Dorsolateral prefrontal cortex (tissue), 120 donors: ENCODE measurements at regions of chr9 and their contacts with region 1.

Region 1: DNA sequence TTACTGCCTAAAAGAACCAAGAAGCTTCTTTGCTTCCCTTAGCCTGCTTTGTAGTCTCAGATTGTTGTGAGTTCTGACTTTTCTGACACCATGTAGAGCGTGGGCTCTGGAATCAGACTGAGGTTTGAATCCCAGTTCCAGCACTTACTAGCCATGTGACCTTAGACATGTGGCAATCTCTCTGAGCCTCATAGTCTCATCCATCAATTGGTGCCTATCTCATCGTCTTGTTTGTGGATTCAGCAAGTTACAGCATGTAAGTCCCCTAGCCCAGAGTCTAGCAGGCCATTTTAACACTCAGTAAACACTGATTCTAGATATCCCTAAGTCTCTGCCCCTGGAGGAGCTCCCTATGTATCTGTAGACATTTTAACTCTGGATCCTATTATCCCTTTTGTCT is 94.7 kb downstream of the ANGPTL2 start:
- DNase-seq: no peak
- H3K4me3 ChIP-seq: no peak overlapping the region
- H3K27ac ChIP-seq: peak overlapping the region in 14 of 59 donors; percentile 1 to 55 (median 22)
- H3K27me3 ChIP-seq: no peaks in the 10 kb centered on the region
- CTCF ChIP-seq: no peak

Region 2: GRCh38 chr9:126661521-126662220 is 366.0 kb before region 1 on chr9:
- intact Hi-C with region 1: no loop called
- DNase-seq: no peak
- H3K4me3 ChIP-seq: no peak overlapping the region
- H3K27ac ChIP-seq: no peak overlapping the region
- H3K27me3 ChIP-seq: peaks cover 0 to 33% (median 10%) of the 10 kb centered on the region in 45 donors
- CTCF ChIP-seq: no peak

Region 3: DNA sequence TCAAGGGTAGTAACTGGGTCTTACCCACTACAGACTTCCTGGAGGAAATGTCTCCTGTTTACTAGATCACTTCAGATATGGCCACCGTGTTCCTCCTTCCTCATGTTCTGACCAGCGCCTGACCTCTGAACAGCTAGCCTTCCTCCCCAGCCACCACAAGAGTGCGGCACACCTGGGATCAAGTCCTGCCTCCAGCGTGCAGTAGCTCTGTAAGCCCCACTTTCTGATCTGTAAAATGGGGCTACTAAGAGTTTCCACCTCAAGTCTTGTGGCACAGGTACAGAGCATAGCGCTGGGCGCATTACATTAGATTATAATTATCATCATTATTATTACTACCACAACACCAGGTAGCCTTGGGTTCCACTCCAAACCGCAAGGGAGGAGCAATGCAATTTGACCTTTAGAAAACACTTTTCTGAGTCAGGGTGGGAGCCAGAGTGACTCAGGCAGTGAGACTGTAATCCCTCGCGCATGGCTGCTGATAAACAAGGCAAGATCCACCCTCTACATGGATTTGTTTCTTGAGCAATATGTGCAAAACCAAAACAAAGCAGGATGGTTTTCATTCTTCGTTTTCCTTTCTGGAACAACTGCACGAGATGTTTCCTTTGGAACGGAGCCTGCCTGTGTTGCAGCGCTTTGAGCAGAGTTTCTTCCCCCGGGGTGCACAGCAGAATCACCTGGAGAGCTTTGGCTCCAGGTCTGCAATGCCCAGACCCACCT is 159.7 kb after region 1 on chr9:
- intact Hi-C with region 1: loop called in 1 of 2 experiments (anchors 5 kb)
- DNase-seq: peak in 2 of 10 donors; percentile 9 to 36
- H3K4me3 ChIP-seq: no peak overlapping the region
- H3K27ac ChIP-seq: peak overlapping the region in 57 of 59 donors; percentile 34 to 94 (median 85)
- H3K27me3 ChIP-seq: no peaks in the 10 kb centered on the region
- CTCF ChIP-seq: no peak